Gastrocnemius medialis (tissue), 4 donors: ENCODE measurements at regions of chr3 and their contacts with region 1.

Region 1: DNA sequence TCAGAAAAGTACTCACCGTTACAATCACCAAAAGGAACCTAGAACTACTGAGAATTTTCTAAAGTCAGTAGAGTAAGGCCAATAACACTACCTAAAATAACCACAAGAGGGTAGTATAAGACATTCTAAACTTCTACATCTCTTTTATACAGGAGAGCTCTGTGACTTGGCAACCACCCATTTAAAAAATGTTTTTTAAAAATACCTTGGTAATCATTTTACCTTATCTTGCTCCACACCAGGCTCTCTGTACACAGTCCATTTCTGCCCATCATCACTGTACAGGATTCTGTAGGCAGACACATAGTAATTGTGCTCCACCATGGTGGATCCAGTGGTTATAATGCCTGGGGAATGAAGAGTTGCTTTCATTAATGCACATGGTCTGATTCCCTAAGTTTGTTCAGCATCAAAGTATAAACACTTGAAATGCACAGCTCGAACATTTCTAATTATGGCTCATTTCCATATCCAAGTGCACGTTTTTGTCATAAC is 54.5 kb downstream of the ST3GAL6 start:
- DNase-seq: no peak
- ATAC-seq: peak; percentile 68 to 87
- H3K4me3 ChIP-seq: no peak overlapping the region
- H3K27ac ChIP-seq: no peak overlapping the region
- H3K4me1 ChIP-seq: no peaks in the 10 kb centered on the region
- H3K27me3 ChIP-seq: no peaks in the 10 kb centered on the region
- CTCF ChIP-seq: peak; percentile 60 to 84 (median 75)
- POLR2A ChIP-seq: no peak

Region 2: DNA sequence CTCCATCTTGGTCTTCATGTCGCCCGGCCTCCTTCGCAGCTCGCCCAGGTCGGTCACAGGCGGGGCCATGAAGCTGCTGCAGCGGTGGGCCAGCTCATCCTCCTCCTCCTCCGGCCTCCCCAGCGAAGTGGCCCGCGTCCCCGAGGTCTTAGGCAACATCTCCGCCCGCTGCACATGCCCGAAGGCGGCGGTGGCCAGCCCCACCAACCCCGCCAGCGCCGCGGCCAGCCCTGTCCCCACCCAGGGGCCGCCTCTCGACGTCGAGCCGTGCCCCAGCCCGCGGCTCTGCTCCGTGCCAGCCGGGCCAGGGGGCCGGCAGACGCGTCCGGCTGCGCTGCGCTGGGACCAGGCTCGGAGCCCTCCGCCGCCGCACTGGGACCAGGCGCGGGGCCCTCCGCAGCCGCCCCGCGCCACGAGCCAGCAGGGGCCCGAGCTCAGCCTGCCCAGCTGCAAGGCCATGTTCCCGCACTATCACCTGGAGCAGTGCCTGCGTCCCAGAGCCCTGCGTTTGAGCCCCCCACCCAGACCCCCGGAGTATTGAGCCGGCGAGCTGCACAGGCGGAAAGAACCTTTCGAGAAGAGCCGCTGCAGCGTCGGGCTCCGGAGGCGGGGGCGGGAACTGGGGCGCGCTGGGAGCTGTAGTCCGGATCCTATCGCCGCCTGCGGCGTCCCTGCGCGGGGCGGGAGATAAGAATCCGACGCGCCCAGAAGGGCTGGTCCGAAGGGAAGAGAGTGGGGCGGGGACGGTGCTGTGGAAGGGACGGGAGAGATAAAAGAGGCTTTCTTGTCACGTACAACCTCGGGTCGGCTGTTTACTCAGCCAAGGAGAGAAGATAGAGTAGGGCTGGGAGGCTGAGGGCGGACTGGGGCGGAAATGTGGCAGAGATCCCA is 224.3 kb before region 1 on chr3 and contains the start of gene CPOX:
- in situ Hi-C with region 1: loop called in 3 of 4 experiments (anchors 5 kb)
- intact Hi-C with region 1: no loop called
- DNase-seq: peak; percentile 63 to 73
- ATAC-seq: peak; percentile 94 to 95
- H3K4me3 ChIP-seq: peak within 1 kb of the TSS; percentile 73 to 91 (median 78)
- H3K27ac ChIP-seq: peak within 1 kb of the TSS; percentile 72 to 85 (median 78)
- H3K4me1 ChIP-seq: peaks cover 9 to 12% of the 10 kb centered on the region in 2 donors
- H3K27me3 ChIP-seq: no peaks in the 10 kb centered on the region
- CTCF ChIP-seq: no peak
- POLR2A ChIP-seq: peak; percentile 32 to 39
- total RNA-seq, gene CPOX: 9.8 to 25.6 (median 15.1) TPM

Region 3: GRCh38 chr3:98901392-98902350 is 84.1 kb after region 1 on chr3 and contains the start of gene DCBLD2:
- in situ Hi-C with region 1: no loop called
- intact Hi-C with region 1: loop called (anchors 5 kb)
- DNase-seq: peak; percentile 98
- ATAC-seq: peak; percentile 99
- H3K4me3 ChIP-seq: peak within 1 kb of the TSS; percentile 83 to 96 (median 88)
- H3K27ac ChIP-seq: peak within 1 kb of the TSS; percentile 87 to 91 (median 89)
- H3K4me1 ChIP-seq: peaks cover 4 to 15% of the 10 kb centered on the region in 2 donors
- H3K27me3 ChIP-seq: no peaks in the 10 kb centered on the region
- CTCF ChIP-seq: no peak
- POLR2A ChIP-seq: peak; percentile 87 to 95
- total RNA-seq, gene DCBLD2: 5.6 to 9.0 (median 6.7) TPM

Region 4: GRCh38 chr3:98945101-98945524 is 127.5 kb after region 1 on chr3:
- in situ Hi-C with region 1: no loop called
- intact Hi-C with region 1: no loop called
- DNase-seq: no peak
- ATAC-seq: no peak
- H3K4me3 ChIP-seq: no peak overlapping the region
- H3K27ac ChIP-seq: no peak overlapping the region
- H3K4me1 ChIP-seq: no peaks in the 10 kb centered on the region
- H3K27me3 ChIP-seq: no peaks in the 10 kb centered on the region
- CTCF ChIP-seq: no peak
- POLR2A ChIP-seq: no peak

Region 5: GRCh38 chr3:99172736-99173657 is 355.4 kb after region 1 on chr3:
- in situ Hi-C with region 1: loop called in 1 of 4 experiments (anchors 25 kb)
- intact Hi-C with region 1: no loop called
- DNase-seq: no peak
- ATAC-seq: no peak
- H3K4me3 ChIP-seq: no peak overlapping the region
- H3K27ac ChIP-seq: no peak overlapping the region
- H3K4me1 ChIP-seq: no peaks in the 10 kb centered on the region
- H3K27me3 ChIP-seq: no peaks in the 10 kb centered on the region
- CTCF ChIP-seq: peak in 3 of 5 experiments; percentile 13 to 47 (median 43)
- POLR2A ChIP-seq: no peak